Activated CD8-positive, alpha-beta T cell treated with anti-CD3 and anti-CD28 coated beads for 36 hours (primary cell): ENCODE measurements at regions of chr17 and their contacts with region 1.

Region 1: DNA sequence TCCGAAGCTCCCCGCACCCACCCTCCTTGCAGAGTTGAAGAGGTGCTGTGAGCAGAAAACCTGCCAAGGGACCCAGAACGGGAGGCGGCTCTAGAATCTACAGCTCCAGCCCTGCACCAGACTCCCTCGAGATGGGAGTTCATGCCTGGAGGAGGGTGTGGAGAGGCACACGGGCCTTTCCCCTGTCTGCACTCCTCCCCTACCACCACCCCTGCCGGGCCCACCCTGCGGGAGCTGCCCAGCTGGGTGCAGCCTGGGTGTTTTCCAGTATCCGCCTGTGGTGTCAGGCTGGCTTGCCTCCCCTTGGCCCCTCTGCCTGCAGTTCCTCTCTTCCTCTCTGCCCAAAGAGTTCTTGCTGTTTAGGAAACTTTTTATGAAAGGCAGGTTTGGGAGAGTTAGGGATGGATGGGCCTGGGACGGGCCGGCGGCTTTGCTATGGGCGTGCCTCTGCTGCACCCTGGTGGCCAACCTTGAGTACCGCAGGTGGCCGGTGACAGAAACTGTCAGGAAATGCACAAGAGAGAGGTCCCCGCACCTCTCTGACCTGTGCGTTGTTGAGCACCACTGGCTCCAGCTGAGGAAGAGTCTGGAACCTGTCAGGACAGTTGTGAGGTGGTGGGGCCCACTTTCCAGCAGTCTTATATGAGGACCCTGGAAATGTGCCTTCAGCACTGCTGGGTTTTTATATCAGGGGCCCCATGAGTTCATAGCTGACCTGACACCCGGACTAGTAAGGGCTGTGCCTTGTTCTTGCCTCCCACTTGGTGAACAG is 354.1 kb downstream of the SEC14L1 start:
- DNase-seq: peak; percentile 81
- ATAC-seq: peak; percentile 76
- H3K4me3 Mint-ChIP-seq: no peak overlapping the region
- H3K27ac Mint-ChIP-seq: peak overlapping the region; percentile 44
- H3K4me1 Mint-ChIP-seq: peaks cover 27% of the 10 kb centered on the region
- H3K27me3 Mint-ChIP-seq: no peaks in the 10 kb centered on the region
- CTCF ChIP-seq: peak; percentile 100

Region 2: DNA sequence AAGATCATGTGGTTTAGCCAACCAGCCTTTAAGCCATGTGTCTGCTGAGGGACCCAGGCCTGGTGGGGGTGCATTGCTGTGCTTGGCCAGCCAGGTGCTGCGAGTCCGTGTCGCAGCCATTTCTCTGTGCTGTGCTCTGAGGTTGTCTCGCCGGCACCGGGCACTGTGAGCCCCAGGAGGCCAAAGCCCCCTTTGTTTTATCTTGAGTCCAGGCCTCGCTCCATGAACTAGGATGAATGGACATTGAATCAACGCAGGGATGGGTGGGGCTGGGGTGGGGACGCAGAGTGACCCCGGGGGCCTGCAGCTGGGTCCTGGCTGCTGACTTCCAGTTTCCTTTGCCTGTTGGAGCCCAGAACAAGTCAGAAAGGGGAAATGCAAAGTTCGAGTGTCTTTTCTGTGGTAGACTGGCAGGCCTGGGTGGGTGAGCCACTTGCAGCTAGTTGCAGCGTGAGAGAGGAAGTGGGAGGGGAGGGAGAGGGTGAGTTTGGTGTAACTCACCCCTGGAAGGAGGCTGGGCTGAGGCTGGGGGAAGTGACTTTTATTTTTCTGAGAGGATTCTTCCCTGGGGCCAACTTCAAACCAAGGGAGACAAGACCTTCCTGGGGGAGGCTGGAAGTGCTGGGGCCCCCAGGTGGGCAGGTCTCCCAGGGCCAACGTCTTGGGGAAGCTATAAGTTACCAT is 29.4 kb before region 1 on chr17:
- CTCF ChIA-PET with region 1: interaction called, 15 read pairs
- POLR2A ChIA-PET with region 1: interaction called, 4 read pairs
- intact Hi-C with region 1: no loop called
- DNase-seq: peak; percentile 91
- ATAC-seq: peak; percentile 81
- H3K4me3 Mint-ChIP-seq: peak overlapping the region; percentile 60
- H3K27ac Mint-ChIP-seq: peak overlapping the region; percentile 89
- H3K4me1 Mint-ChIP-seq: peaks cover 82% of the 10 kb centered on the region
- H3K27me3 Mint-ChIP-seq: no peaks in the 10 kb centered on the region
- CTCF ChIP-seq: no peak

Region 3: DNA sequence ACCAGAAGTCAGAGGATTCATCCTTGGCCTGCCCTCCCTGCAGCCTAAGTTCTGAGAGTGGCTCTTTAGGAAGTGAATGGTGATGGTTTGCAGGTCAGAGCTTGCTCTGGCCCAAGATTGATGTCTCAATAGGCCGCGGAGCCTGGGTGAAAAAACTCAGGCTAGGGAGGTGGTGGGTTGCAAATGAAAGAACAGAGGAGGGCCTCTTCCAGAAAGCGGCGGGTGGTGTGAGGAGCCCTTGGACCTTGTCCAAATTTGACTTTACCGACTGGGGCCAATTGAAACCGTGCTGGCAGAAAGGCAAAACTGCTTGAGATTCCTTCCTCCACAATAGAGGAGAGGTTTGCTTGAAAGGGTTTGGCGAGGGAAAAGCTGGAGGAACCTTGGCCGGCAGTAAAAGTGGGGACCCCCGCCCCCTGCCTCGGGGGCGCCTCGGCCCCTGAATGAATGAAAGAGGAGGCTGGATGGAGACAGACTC is 22.8 kb before region 1 on chr17:
- CTCF ChIA-PET with region 1: interaction called, 14 read pairs
- POLR2A ChIA-PET with region 1: interaction called, 3 read pairs
- intact Hi-C with region 1: no loop called
- DNase-seq: peak; percentile 26
- ATAC-seq: no peak
- H3K4me3 Mint-ChIP-seq: peak overlapping the region; percentile 69
- H3K27ac Mint-ChIP-seq: peak overlapping the region; percentile 87
- H3K4me1 Mint-ChIP-seq: peaks cover 94% of the 10 kb centered on the region
- H3K27me3 Mint-ChIP-seq: no peaks in the 10 kb centered on the region
- CTCF ChIP-seq: no peak

Region 4: GRCh38 chr17:77476931-77477877 is 17.6 kb before region 1 on chr17:
- CTCF ChIA-PET with region 1: interaction called, 14 read pairs
- POLR2A ChIA-PET with region 1: interaction called, 5 read pairs
- intact Hi-C with region 1: no loop called
- DNase-seq: peak; percentile 62
- ATAC-seq: no peak
- H3K4me3 Mint-ChIP-seq: peak overlapping the region; percentile 28
- H3K27ac Mint-ChIP-seq: peak overlapping the region; percentile 53
- H3K4me1 Mint-ChIP-seq: peaks cover 81% of the 10 kb centered on the region
- H3K27me3 Mint-ChIP-seq: no peaks in the 10 kb centered on the region
- CTCF ChIP-seq: no peak

Region 5: DNA sequence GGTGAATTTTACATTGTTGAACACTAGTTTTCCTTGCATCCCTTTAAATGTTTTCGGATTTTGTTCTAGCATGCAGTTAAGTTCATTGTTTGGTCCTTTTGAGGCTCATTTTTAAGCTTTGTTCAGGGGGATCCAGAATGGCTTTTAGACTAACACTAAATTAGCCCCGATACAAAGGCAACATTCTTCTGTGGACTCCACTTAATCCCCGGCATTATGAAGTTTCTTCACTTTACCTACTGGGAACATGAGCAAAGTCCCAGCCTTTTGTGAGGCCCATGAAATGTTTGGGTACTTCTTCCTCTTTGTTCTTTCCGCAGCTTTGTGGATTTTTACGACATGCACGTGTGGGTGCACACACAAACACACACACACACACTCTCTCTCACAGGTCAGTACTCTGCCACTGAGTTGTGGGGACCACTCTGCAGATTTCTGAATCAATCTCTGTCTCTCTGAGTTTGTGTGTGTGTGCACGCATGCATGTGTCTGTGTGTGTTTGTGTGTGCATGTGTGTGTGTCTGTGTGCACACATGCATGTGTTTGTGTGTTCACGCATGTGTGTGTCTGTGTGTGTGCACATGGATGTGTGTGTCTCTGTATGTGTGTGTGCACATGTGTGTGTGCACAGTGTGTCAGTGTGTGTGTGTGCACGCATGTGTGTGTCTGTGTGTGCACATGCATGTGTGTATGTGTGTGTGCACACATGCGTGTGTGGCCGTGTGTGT is 223.3 kb after region 1 on chr17:
- CTCF ChIA-PET with region 1: no interaction called
- POLR2A ChIA-PET with region 1: no interaction called
- intact Hi-C with region 1: no loop called
- DNase-seq: no peak
- ATAC-seq: no peak
- H3K4me3 Mint-ChIP-seq: no peak overlapping the region
- H3K27ac Mint-ChIP-seq: no peak overlapping the region
- H3K4me1 Mint-ChIP-seq: no peaks in the 10 kb centered on the region
- H3K27me3 Mint-ChIP-seq: no peaks in the 10 kb centered on the region
- CTCF ChIP-seq: no peak